Esophagus muscularis mucosa (tissue), 4 donors: ENCODE measurements at regions of chr15 and their contacts with region 1.

Region 1: GRCh38 chr15:25661898-25662297 is 201.2 kb downstream of the ATP10A start:
- DNase-seq: no peak
- H3K4me3 ChIP-seq: no peak overlapping the region
- H3K27ac ChIP-seq: peak overlapping the region in 1 of 4 donors; percentile 32
- H3K4me1 ChIP-seq: peaks cover 0 to 14% (median 0%) of the 10 kb centered on the region in 4 donors
- H3K27me3 ChIP-seq: no peaks in the 10 kb centered on the region
- CTCF ChIP-seq: peak in 1 of 3 experiments; percentile 20
- EP300 ChIP-seq: no peak
- POLR2A ChIP-seq: no peak

Region 2: DNA sequence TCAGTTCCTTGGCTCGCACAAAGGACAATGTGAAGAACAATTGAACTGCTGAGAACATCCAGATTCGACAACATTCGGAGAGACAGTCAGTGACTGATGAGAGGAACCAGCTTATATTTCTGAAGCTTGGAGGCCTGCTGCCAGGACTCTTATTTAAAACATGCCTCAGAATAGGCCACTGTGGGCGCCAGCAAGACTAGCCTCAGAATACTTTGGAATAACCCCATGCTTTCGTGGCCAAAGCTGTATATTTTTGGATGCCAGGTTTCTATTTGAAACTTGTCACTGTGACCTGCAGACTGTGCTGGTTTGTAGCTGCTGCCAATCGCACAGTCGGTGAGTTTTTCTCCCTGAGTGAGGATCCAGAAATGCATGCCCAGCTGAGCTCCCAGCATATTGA is 93.1 kb before region 1 on chr15:
- intact Hi-C with region 1: loop called (anchors 10 kb)
- DNase-seq: no peak
- H3K4me3 ChIP-seq: no peak overlapping the region
- H3K27ac ChIP-seq: peak overlapping the region; percentile 74 to 78 (median 78)
- H3K4me1 ChIP-seq: peaks cover 21 to 61% (median 39%) of the 10 kb centered on the region in 4 donors
- H3K27me3 ChIP-seq: no peaks in the 10 kb centered on the region
- CTCF ChIP-seq: no peak
- EP300 ChIP-seq: no peak
- POLR2A ChIP-seq: no peak

Region 3: GRCh38 chr15:25701721-25702465 is 40.0 kb after region 1 on chr15:
- intact Hi-C with region 1: no loop called
- DNase-seq: no peak
- H3K4me3 ChIP-seq: no peak overlapping the region
- H3K27ac ChIP-seq: no peak overlapping the region
- H3K4me1 ChIP-seq: peaks cover 0 to 9% (median 0%) of the 10 kb centered on the region in 4 donors
- H3K27me3 ChIP-seq: no peaks in the 10 kb centered on the region
- CTCF ChIP-seq: no peak
- EP300 ChIP-seq: no peak
- POLR2A ChIP-seq: no peak

Region 4: DNA sequence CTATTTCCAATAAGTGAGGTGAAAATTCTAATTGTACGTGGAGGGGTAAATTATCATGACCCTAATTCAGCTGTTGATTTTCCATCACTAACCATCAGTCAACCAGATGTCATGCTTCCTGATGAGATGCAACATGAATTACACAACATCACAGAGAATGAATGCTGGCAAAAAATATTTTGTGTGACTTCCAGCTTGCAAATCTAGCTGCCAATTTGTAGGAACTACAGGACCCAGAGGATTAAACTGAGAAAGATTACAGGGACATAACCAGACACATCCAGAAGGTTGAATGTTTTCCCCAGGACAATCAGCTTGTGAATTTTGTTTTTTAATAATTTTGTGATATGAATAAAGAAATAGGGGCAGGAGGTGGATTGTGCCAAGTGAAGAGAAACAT is 550.2 kb after region 1 on chr15:
- intact Hi-C with region 1: no loop called
- DNase-seq: no peak
- H3K4me3 ChIP-seq: no peak overlapping the region
- H3K27ac ChIP-seq: no peak overlapping the region
- H3K4me1 ChIP-seq: no peaks in the 10 kb centered on the region
- H3K27me3 ChIP-seq: no peaks in the 10 kb centered on the region
- CTCF ChIP-seq: no peak
- EP300 ChIP-seq: no peak
- POLR2A ChIP-seq: no peak